Gastrocnemius medialis (tissue), 4 donors: ENCODE measurements at regions of chr1 and their contacts with region 1.

Region 1: DNA sequence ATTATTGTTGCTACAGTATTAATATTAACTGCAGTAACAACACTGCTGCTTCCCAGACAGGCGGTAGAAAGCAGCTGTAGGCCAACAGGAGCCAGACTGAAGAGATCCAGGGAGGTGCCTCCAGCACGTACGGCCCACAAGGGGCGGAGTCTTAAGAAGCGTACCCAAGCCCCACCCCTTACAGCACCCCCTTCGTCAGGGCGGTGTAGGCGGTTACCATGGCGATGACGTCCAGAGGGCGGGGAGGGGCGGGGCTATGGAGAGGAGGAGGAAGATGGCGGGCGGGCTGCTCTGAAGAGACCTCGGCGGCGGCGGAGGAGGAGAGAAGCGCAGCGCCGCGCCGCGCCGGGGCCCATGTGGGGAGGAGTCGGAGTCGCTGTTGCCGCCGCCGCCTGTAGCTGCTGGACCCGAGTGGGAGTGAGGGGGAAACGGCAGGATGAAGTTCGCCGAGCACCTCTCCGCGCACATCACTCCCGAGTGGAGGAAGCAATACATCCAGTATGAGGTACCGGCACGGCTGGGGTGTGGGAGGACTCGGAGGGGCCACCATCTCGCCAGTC is at the start of gene XPR1:
- DNase-seq: peak; percentile 98 to 99
- ATAC-seq: peak; percentile 97
- H3K4me3 ChIP-seq: peak within 1 kb of the TSS; percentile 75 to 100 (median 92)
- H3K27ac ChIP-seq: peak within 1 kb of the TSS; percentile 83 to 97 (median 90)
- H3K4me1 ChIP-seq: peaks cover 32 to 34% of the 10 kb centered on the region in 2 donors
- H3K27me3 ChIP-seq: no peaks in the 10 kb centered on the region
- CTCF ChIP-seq: peak in 4 of 5 experiments; percentile 17 to 58 (median 33)
- POLR2A ChIP-seq: peak; percentile 85 to 95
- total RNA-seq, gene XPR1: 14.5 to 24.9 (median 18.6) TPM

Region 2: DNA sequence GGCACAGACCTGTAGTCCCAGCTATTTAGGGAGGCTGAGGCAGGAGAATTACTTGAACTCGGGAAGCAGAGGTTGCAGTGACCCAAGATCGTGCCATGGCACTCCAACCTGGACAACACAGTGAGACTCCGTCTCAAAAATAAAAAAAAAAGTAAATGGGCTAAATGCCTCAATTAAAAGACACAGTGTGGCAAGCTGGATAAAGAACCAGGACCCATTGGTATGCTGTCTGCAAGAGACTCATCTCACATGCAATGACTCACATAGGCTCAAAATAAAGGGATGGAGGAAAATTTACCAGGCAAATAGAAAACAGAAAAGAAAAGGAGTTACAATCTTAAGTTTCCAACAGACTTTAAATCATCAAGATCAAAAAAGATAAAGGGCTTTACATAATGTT is 169.7 kb before region 1 on chr1:
- in situ Hi-C with region 1: no loop called
- intact Hi-C with region 1: no loop called
- DNase-seq: no peak
- ATAC-seq: no peak
- H3K4me3 ChIP-seq: no peak overlapping the region
- H3K27ac ChIP-seq: no peak overlapping the region
- H3K4me1 ChIP-seq: no peaks in the 10 kb centered on the region
- H3K27me3 ChIP-seq: no peaks in the 10 kb centered on the region
- CTCF ChIP-seq: no peak
- POLR2A ChIP-seq: no peak

Region 3: DNA sequence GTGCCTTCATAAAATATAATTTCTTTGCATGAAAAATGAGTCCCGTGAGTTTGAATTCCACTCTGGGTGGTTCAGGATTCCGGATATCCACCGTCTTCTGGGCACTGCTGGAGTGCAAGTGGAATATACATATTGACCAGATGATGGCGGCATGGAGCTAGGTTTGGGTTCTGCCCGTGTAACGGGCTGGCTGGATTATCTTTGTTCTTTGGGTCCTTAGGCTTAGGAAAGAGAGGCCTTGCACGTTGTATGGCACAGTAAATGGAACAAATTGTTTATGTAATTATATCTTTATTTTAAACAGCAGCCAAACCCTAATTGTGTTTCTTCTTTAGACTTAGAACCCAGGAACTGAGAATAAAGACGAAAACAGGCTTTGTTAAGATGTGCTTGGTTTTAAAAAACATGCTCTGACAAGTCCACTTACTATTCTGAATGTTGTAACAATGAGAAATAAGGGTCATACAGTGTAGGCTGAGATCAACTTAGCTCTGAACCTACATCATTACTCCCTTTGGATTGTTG is 115.9 kb before region 1 on chr1:
- in situ Hi-C with region 1: loop called in 1 of 4 experiments (anchors 10 kb)
- intact Hi-C with region 1: loop called (anchors 5 kb)
- DNase-seq: peak; percentile 41 to 48
- ATAC-seq: peak; percentile 96 to 100
- H3K4me3 ChIP-seq: no peak overlapping the region
- H3K27ac ChIP-seq: no peak overlapping the region
- H3K4me1 ChIP-seq: peaks cover 3 to 7% of the 10 kb centered on the region in 2 donors
- H3K27me3 ChIP-seq: no peaks in the 10 kb centered on the region
- CTCF ChIP-seq: peak; percentile 64 to 81 (median 80)
- POLR2A ChIP-seq: no peak

Region 4: DNA sequence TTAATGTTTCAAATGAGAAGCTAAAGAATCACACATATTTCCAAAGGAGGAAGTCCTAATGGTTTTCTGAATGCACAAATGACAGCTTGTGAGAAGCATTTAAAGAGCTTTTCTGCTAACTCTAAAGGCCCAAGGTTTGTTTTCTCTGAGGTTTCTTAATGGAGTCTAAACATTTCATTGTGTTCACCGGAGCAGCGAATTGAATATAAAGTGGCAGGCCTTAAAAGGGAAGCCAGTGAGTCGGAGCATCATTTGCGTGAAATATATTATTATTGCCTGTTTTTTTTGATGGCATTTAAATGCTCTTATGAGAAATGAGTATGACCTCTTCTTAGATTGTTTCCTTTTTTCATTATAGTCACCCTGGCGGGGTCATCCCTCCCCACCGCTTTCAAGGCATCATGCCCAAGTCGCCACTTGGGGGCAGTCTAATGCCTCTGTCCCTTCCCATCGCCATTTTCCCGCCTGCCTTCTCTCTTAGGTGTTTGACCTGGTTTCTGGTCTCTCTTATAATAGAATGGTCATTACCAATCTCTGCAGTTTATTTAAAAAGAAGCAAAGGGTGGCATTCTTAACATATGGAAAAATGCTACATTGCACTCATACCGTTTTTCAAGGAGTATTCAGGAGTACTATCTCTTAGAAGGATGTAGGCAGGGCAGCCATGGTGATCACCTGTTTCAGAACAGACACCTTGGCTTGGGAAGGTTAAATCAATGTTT is 98.4 kb before region 1 on chr1:
- in situ Hi-C with region 1: no loop called
- intact Hi-C with region 1: loop called (anchors 5 kb)
- DNase-seq: peak; percentile 26 to 28
- ATAC-seq: peak; percentile 58 to 72
- H3K4me3 ChIP-seq: no peak overlapping the region
- H3K27ac ChIP-seq: no peak overlapping the region
- H3K4me1 ChIP-seq: peaks cover 0 to 10% of the 10 kb centered on the region in 2 donors
- H3K27me3 ChIP-seq: no peaks in the 10 kb centered on the region
- CTCF ChIP-seq: peak; percentile 65 to 80 (median 76)
- POLR2A ChIP-seq: no peak

Region 5: DNA sequence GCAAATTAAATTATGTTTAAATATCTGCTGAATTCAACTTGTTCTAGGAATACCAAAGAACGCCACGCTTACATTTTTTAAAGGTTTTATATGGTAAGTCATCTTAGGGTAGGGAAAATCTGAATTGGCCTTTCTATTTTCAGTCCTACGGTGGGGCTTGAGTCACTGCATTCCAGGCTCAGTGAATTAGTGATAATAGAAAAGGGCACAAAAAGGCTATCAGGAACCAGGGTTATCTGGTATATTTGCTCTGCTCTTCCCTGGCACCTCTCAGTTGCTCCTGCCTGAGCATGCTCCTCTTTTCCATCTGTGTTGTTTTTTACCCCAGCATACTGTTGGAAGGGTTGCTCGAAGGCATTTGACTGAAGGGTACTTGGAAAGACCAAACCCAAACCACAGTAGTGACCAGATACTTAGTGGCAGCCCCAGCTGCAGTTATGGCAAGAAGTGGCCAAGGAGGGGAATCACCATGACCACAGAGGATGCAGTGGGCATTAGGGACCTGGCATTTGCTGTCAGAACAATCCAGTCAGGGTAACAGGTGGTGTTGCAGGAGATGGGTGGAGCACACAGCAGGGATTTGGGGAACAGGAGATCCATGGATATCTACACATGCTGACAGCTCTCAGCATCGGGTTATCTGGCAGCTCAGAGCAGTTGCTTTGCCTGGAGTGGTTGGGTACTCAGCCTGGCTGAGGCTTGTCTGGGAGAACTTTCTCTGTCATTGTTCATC is 70.8 kb before region 1 on chr1:
- in situ Hi-C with region 1: no loop called
- intact Hi-C with region 1: no loop called
- DNase-seq: no peak
- ATAC-seq: no peak
- H3K4me3 ChIP-seq: no peak overlapping the region
- H3K27ac ChIP-seq: no peak overlapping the region
- H3K4me1 ChIP-seq: peaks cover 0 to 6% of the 10 kb centered on the region in 2 donors
- H3K27me3 ChIP-seq: no peaks in the 10 kb centered on the region
- CTCF ChIP-seq: no peak
- POLR2A ChIP-seq: no peak

Region 6: DNA sequence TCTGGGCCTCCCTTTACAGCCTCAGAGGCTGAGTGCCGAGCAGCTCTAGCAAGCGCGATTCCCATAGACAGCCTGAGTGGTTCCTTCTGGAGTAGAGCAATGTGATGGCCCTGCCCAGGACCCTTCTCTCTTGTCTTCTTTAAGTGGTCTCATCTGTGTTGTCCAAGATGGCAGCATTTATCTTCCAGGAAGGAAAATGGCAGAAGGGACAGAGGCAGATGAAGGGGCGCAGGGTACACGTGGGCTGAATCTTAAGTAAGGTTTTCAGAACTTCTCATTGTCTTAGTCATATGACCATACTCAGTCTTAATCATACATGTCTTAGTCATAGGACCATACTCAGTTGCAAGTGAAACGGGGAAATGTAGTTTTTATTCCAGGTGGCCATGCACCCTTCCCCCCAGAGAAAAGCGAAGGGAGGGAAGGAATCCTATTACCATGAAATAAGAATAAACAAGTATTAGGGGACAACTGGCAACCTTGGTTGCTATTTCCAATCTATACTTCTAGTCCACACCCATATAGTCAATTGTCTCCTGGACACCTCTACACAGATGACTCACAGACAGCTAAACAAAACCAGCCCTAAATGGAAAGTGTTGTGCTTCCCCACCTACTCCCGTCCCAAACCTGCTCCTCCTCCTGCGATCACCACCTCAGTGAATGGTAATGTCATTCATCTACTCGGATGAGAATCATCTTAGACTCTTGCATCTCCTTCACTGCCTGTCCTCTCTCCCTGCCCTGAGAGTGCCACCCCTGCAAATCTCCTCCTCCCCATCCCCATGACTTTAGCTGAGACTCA is 59.8 kb before region 1 on chr1:
- in situ Hi-C with region 1: no loop called
- intact Hi-C with region 1: no loop called
- DNase-seq: no peak
- ATAC-seq: no peak
- H3K4me3 ChIP-seq: no peak overlapping the region
- H3K27ac ChIP-seq: no peak overlapping the region
- H3K4me1 ChIP-seq: no peaks in the 10 kb centered on the region
- H3K27me3 ChIP-seq: no peaks in the 10 kb centered on the region
- CTCF ChIP-seq: no peak
- POLR2A ChIP-seq: no peak

Region 7: GRCh38 chr1:180609643-180610555 is 21.9 kb before region 1 on chr1:
- in situ Hi-C with region 1: no loop called
- intact Hi-C with region 1: loop called (anchors 1 kb)
- DNase-seq: peak; percentile 40 to 48
- ATAC-seq: peak; percentile 83 to 87
- H3K4me3 ChIP-seq: no peak overlapping the region
- H3K27ac ChIP-seq: peak overlapping the region; percentile 56 to 77 (median 67)
- H3K4me1 ChIP-seq: peaks cover 12 to 34% of the 10 kb centered on the region in 2 donors
- H3K27me3 ChIP-seq: no peaks in the 10 kb centered on the region
- CTCF ChIP-seq: no peak
- POLR2A ChIP-seq: no peak

Region 8: DNA sequence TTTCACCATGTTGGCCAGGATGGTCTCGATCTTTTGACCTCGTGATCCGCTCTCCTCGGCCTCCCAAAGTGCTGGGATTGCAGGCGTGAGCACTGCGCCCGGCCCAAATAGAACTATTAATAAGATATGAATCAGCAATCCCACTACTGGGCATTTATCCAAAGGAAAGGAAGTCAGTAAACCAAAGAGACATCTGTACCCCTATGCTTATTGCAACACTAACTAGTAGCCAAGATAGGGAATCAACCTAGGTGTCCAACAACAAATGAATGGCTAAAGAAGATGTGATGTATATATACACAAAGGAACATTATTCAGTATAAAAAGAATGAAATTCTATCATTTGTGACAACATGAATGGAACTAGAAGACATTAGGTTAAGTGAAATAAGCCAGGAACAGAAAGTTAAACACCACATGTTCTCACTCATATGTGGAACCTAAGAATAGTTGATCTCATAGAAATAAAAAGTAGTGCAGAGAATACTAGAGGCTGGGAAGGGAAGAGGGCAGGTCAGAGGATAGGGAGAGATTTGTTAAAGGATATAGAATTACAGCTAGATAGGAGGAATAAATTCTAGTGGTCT is 48.8 kb after region 1 on chr1:
- in situ Hi-C with region 1: no loop called
- intact Hi-C with region 1: no loop called
- DNase-seq: peak in 1 of 2 donors; percentile 14
- ATAC-seq: peak; percentile 54 to 58
- H3K4me3 ChIP-seq: no peak overlapping the region
- H3K27ac ChIP-seq: no peak overlapping the region
- H3K4me1 ChIP-seq: no peaks in the 10 kb centered on the region
- H3K27me3 ChIP-seq: no peaks in the 10 kb centered on the region
- CTCF ChIP-seq: no peak
- POLR2A ChIP-seq: no peak

Region 9: DNA sequence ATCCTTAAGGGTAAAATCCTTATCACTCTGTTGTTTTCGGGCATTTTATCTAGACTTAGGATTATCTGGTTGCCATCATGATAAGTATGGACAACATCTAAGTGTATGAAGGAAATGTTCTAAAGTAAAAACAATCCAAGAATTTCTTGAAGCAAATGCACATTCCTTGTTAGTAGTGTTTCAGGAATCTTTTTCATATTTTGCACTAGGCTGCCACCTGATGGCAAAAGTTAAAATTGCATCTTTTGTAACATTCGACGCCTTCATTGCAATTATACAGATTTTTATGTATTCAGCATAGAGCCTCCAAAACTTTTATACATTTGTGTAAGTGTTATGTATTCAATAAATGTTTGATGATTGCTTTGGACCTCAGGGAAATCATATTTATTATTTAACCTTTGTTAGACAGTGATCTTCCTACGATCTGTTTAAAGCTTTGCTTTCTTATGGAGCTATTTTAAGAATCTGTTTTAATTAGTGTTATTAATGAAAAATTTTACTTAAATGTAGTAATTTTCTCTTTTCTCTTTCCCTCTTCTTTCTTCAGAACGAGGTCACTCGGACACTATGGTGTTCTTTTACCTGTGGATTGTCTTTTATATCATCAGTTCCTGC is 231.4 kb after region 1 on chr1:
- in situ Hi-C with region 1: loop called in 1 of 4 experiments (anchors 25 kb)
- intact Hi-C with region 1: loop called (anchors 5 kb)
- DNase-seq: no peak
- ATAC-seq: no peak
- H3K4me3 ChIP-seq: no peak overlapping the region
- H3K27ac ChIP-seq: no peak overlapping the region
- H3K4me1 ChIP-seq: no peaks in the 10 kb centered on the region
- H3K27me3 ChIP-seq: no peaks in the 10 kb centered on the region
- CTCF ChIP-seq: peak; percentile 58 to 81 (median 72)
- POLR2A ChIP-seq: no peak

Region 10: GRCh38 chr1:181021811-181022434 is 390.1 kb after region 1 on chr1:
- in situ Hi-C with region 1: no loop called
- intact Hi-C with region 1: loop called (anchors 10 kb)
- DNase-seq: peak; percentile 38 to 45
- ATAC-seq: peak; percentile 56 to 60
- H3K4me3 ChIP-seq: peak overlapping the region; percentile 68 to 99 (median 85)
- H3K27ac ChIP-seq: peak overlapping the region; percentile 88 to 98 (median 96)
- H3K4me1 ChIP-seq: peaks cover 13 to 20% of the 10 kb centered on the region in 2 donors
- H3K27me3 ChIP-seq: no peaks in the 10 kb centered on the region
- CTCF ChIP-seq: no peak
- POLR2A ChIP-seq: no peak